MCF 10A (cell line): ENCODE measurements at regions of chr10 and their contacts with region 1.

Region 1: DNA sequence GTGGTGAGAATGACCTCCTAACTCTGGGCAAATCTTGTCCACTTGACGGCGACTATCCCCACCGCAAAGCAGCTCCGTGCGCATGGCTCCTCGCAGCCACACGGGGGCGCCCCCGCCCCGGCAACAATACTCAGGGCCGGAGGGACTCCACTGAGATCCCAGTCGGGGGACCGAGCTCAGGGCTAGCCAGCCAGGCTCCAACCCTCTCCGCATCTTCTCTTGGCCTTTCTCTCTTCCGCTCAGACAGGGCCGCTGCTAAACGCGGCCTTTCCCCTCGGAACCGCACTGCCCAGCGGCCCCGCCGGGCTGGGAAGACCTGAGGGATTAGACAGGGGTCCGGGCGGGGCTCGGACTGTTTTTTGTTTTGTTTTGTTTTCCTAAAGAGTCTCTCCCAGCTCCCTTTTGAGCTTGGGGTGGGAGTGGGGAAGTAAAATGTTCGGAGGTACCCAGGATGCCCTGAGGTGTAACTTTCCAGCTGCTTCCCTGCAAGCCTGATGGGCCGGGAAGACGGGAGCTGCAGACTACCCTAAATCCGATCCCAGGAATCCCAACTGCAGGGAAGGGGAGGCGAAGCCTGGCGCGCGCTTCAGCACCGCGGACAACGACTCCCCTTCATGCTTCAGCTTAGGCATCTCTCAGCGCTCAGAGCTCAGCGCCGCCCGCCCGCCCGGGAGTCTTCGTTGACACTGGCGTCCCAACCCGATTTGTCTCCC is 2.7 kb downstream of the KCNIP2 start:
- DNase-seq: peak; percentile 79
- H3K4me3 Mint-ChIP-seq: peak overlapping the region; percentile 57
- H3K27ac Mint-ChIP-seq: no peak overlapping the region
- H3K4me1 Mint-ChIP-seq: peaks cover 15% of the 10 kb centered on the region
- H3K27me3 Mint-ChIP-seq: no peaks in the 10 kb centered on the region
- CTCF ChIP-seq: peak; percentile 85

Region 2: DNA sequence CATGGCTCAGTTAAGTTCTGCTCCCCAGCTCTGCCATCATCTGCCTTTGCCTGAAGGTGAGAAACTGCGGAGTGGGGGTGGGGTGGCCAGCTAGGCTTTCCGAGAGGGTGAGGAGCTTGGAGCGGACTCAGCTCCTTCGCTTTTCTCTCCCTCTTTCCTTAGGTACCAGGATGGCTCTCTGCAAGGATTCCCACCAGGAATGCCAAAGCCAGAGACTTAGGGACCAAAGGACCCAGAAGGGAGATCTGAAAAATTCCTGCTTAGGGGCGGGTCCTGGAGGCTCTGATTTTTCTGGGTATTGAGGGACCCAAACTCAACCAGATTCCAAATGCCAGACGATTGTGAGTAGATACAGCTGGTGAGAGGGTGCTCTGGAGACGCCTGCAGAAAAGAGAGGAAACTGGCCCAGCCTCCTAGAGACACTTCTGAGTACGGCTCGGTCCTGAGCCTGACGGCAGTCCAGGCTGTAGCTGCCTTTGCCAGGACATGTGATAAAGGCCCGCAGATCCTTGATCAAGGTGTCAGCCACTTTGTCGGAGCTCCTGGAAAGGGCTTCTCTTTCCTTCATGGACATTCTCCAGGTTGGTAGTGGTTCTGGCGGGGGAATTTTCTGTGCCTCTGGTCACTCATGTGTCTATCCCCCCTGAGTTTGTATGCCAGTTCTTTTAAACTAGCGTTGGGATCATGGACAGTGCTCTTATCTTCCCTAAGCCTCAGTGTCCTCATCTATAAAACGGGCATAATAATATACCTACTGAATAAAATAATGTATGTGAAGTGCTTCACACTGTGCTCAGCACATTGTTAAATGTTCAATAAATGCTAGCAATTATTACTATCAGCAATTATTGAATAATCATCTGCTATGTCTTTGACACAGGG is 529.5 kb before region 1 on chr10:
- CTCF ChIA-PET with region 1: no interaction called
- POLR2A ChIA-PET with region 1: no interaction called
- intact Hi-C with region 1: no loop called
- DNase-seq: no peak
- H3K4me3 Mint-ChIP-seq: no peak overlapping the region
- H3K27ac Mint-ChIP-seq: no peak overlapping the region
- H3K4me1 Mint-ChIP-seq: peaks cover 14% of the 10 kb centered on the region
- H3K27me3 Mint-ChIP-seq: peaks cover 31% of the 10 kb centered on the region
- CTCF ChIP-seq: no peak

Region 3: GRCh38 chr10:101671453-101671852 is 169.4 kb before region 1 on chr10:
- CTCF ChIA-PET with region 1: no interaction called
- POLR2A ChIA-PET with region 1: no interaction called
- intact Hi-C with region 1: no loop called
- DNase-seq: no peak
- H3K4me3 Mint-ChIP-seq: no peak overlapping the region
- H3K27ac Mint-ChIP-seq: no peak overlapping the region
- H3K4me1 Mint-ChIP-seq: no peaks in the 10 kb centered on the region
- H3K27me3 Mint-ChIP-seq: no peaks in the 10 kb centered on the region
- CTCF ChIP-seq: no peak

Region 4: GRCh38 chr10:101858723-101859500 is 18.0 kb after region 1 on chr10:
- CTCF ChIA-PET with region 1: interaction called, 29 read pairs
- POLR2A ChIA-PET with region 1: no interaction called
- intact Hi-C with region 1: no loop called
- DNase-seq: no peak
- H3K4me3 Mint-ChIP-seq: no peak overlapping the region
- H3K27ac Mint-ChIP-seq: no peak overlapping the region
- H3K4me1 Mint-ChIP-seq: no peaks in the 10 kb centered on the region
- H3K27me3 Mint-ChIP-seq: no peaks in the 10 kb centered on the region
- CTCF ChIP-seq: no peak

Region 5: DNA sequence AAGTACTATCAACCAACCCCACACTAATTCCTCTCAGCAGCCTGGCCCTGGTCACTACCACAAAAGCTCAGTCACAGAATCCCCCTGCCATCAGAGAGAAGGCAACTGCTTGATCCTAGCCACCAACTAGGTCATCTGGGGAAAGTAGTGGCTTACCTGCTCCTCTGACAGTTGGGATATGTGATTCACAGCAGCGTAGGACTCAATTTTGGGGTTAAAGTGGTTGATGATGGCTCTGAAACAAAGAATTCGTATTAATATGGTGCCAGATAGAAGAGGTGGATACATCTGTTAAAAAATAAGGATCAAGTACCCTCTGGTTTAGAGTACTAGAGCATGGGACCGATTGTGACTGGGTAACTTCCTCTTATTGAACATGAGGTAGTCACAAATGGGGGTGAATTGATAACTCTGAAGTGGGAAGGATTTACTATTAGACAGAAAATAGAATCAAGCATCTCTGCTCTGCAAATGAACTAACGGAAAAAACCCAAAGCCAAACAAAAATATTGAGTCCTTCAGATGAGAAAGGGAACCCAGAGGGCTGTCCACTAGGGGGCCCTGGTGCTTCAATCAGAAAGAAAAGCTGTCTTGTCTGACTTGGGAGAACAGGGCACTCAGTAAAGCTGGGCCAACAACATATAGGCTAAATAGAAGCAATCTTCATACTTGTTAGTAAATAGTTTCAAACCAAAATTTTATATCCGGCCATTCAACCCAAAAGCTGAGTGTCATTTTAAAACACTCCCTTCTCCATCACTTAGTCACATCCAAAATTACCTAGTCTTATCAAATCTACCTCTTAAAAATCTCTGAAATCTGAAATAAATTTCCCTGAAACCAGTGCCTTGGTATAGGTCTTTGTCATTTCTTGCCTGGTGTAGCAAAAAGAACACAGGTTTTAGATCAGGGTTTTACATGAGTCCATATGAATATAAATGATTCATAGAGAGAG is 48.6 kb after region 1 on chr10:
- CTCF ChIA-PET with region 1: interaction called, 7 read pairs
- POLR2A ChIA-PET with region 1: no interaction called
- intact Hi-C with region 1: loop called (anchors 1 kb)
- DNase-seq: peak; percentile 81
- H3K4me3 Mint-ChIP-seq: no peak overlapping the region
- H3K27ac Mint-ChIP-seq: peak overlapping the region; percentile 69
- H3K4me1 Mint-ChIP-seq: peaks cover 5% of the 10 kb centered on the region
- H3K27me3 Mint-ChIP-seq: no peaks in the 10 kb centered on the region
- CTCF ChIP-seq: peak; percentile 78

Region 6: GRCh38 chr10:102004376-102004775 is 163.5 kb after region 1 on chr10:
- CTCF ChIA-PET with region 1: interaction called, 69 read pairs
- POLR2A ChIA-PET with region 1: no interaction called
- intact Hi-C with region 1: loop called (anchors 1 kb)
- DNase-seq: peak; percentile 74
- H3K4me3 Mint-ChIP-seq: no peak overlapping the region
- H3K27ac Mint-ChIP-seq: peak overlapping the region; percentile 82
- H3K4me1 Mint-ChIP-seq: peaks cover 16% of the 10 kb centered on the region
- H3K27me3 Mint-ChIP-seq: no peaks in the 10 kb centered on the region
- CTCF ChIP-seq: no peak

Region 7: GRCh38 chr10:102033787-102034186 is 192.9 kb after region 1 on chr10:
- CTCF ChIA-PET with region 1: no interaction called
- POLR2A ChIA-PET with region 1: no interaction called
- intact Hi-C with region 1: no loop called
- DNase-seq: no peak
- H3K4me3 Mint-ChIP-seq: no peak overlapping the region
- H3K27ac Mint-ChIP-seq: no peak overlapping the region
- H3K4me1 Mint-ChIP-seq: no peaks in the 10 kb centered on the region
- H3K27me3 Mint-ChIP-seq: no peaks in the 10 kb centered on the region
- CTCF ChIP-seq: no peak

Region 8: DNA sequence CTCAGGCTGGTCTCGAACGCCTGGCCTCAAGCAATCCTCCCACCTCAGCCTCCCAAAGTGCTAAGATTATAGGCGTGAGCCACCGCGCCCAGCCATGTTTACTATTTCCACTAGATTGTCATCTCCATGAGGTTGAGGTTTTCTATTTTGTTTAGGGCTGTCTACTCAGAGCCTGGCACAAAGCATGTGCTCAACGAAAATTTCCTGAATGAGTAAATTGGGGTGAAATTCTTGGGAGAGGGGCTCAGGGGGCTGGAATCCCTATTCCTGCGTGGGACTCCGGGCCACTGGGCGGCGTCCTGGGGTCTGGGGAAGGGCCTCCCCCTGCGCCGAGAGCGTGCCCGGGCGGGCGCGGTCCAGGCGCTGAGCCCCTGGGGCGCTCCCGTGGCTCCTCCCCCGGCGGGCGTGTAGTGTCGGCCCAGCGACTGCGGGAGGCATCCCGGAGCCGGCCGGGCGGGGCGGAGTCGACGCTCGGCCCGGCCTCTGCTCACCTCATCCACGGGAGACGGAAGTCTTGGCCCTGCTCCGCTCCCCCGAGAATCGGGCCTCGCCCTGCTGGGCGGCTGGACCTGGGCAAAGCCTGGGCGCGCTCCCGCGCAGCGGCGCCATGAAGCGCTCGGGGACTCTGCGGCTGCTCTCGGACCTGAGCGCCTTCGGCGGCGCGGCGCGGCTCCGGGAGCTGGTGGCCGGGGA is 224.1 kb after region 1 on chr10 and contains the start of gene HPS6:
- CTCF ChIA-PET with region 1: interaction called, 13 read pairs
- POLR2A ChIA-PET with region 1: no interaction called
- intact Hi-C with region 1: no loop called
- DNase-seq: peak; percentile 93
- H3K4me3 Mint-ChIP-seq: peak within 1 kb of the TSS; percentile 83
- H3K27ac Mint-ChIP-seq: peak within 1 kb of the TSS; percentile 83
- H3K4me1 Mint-ChIP-seq: peaks cover 16% of the 10 kb centered on the region
- H3K27me3 Mint-ChIP-seq: no peaks in the 10 kb centered on the region
- CTCF ChIP-seq: no peak
- total RNA-seq, gene HPS6: 15.0 and 16.6 TPM in 2 replicates

Region 9: DNA sequence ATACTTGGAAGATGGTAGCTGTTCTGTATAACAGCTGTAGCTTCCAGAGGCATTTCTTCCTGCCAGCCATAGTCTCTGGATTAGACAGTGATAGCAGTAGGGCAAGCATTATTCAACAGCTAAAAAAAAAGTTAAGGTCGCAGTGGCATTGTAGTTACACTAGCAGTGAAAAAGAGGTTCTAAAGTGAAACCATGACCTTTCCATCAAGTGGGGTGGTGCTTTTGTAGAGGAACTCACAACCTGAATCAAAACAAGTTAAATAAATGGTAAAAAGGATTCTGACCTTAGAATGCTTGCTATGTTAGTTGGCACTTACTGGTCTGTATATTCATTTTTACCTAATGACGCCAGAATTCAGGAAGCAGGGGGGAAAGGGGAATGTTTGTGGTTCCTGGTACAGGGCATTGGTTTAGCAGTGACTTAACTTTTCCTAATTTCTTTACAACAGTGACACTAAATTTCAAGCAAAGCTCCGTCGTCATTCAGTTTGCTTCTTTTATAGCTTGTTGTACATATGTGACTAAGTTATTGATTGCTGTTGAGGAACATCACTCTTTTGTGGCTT is 459.5 kb after region 1 on chr10:
- CTCF ChIA-PET with region 1: no interaction called
- POLR2A ChIA-PET with region 1: no interaction called
- intact Hi-C with region 1: no loop called
- DNase-seq: no peak
- H3K4me3 Mint-ChIP-seq: no peak overlapping the region
- H3K27ac Mint-ChIP-seq: peak overlapping the region; percentile 63
- H3K4me1 Mint-ChIP-seq: peaks cover 17% of the 10 kb centered on the region
- H3K27me3 Mint-ChIP-seq: no peaks in the 10 kb centered on the region
- CTCF ChIP-seq: no peak